ENCODE measurements at regions of chr6 and their contacts with region 1.

Region 1: GRCh38 chr6:7300926-7301325 is 12.1 kb downstream of the SSR1 start:
- DNase-seq: no peak
- ATAC-seq: no peak
- H3K4me3 ChIP-seq: no peak overlapping the region
- H3K27ac ChIP-seq: no peak overlapping the region
- H3K4me1 ChIP-seq: no peaks in the 10 kb centered on the region
- H3K27me3 ChIP-seq: no peaks in the 10 kb centered on the region
- CTCF ChIP-seq: no peak
- POLR2A ChIP-seq: no peak

Region 2: DNA sequence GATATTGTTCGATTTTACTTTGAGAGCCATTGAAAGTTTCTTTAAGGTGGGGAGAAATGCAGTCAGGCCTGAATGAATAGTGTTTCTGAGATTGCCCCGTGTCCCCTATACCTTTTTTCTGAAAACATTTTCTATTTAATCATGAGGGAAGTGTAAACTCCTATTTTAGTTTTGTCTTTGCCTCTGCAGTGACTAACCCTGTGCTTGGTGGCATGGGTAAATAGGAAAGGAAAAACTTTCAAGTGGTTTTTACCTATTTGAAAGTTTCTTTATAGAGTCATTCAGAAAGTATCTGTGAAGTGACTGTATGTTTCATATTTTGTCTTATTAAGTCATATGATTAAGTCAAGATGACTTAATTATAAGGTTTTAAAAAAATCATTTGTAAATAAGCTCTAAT is 303.6 kb after region 1 on chr6:
- in situ Hi-C with region 1: loop called in 3 of 4 experiments (anchors 10 to 25 kb)
- intact Hi-C with region 1: no loop called
- DNase-seq: no peak
- ATAC-seq: no peak
- H3K4me3 ChIP-seq: no peak overlapping the region
- H3K27ac ChIP-seq: no peak overlapping the region
- H3K4me1 ChIP-seq: no peaks in the 10 kb centered on the region
- H3K27me3 ChIP-seq: no peaks in the 10 kb centered on the region
- CTCF ChIP-seq: no peak
- POLR2A ChIP-seq: no peak

Measured in gastrocnemius medialis (tissue), 4 donors.